ENCODE measurements at regions of chr11 and their contacts with region 1.

Region 1: GRCh38 chr11:3412837-3413236 is 33.9 kb upstream of the ZNF195 start:
- DNase-seq: no peak
- H3K4me3 Mint-ChIP-seq: no peak overlapping the region
- H3K27ac Mint-ChIP-seq: no peak overlapping the region
- H3K4me1 Mint-ChIP-seq: peaks cover 2% of the 10 kb centered on the region
- H3K27me3 Mint-ChIP-seq: no peaks in the 10 kb centered on the region

Region 2: GRCh38 chr11:3341298-3341697 is 71.5 kb before region 1 on chr11:
- CTCF ChIA-PET with region 1: interaction called, 68 read pairs
- POLR2A ChIA-PET with region 1: no interaction called
- intact Hi-C with region 1: no loop called
- DNase-seq: peak; percentile 79
- H3K4me3 Mint-ChIP-seq: no peak overlapping the region
- H3K27ac Mint-ChIP-seq: no peak overlapping the region
- H3K4me1 Mint-ChIP-seq: no peaks in the 10 kb centered on the region
- H3K27me3 Mint-ChIP-seq: peaks cover 32% of the 10 kb centered on the region